GM13976 (cell line): ENCODE measurements at regions of chr13 and their contacts with region 1.

Region 1: GRCh38 chr13:21638319-21639282 is 32.3 kb upstream of the FGF9 start:
- DNase-seq: peak; percentile 60
- CTCF ChIP-seq: peak; percentile 39

Region 2: DNA sequence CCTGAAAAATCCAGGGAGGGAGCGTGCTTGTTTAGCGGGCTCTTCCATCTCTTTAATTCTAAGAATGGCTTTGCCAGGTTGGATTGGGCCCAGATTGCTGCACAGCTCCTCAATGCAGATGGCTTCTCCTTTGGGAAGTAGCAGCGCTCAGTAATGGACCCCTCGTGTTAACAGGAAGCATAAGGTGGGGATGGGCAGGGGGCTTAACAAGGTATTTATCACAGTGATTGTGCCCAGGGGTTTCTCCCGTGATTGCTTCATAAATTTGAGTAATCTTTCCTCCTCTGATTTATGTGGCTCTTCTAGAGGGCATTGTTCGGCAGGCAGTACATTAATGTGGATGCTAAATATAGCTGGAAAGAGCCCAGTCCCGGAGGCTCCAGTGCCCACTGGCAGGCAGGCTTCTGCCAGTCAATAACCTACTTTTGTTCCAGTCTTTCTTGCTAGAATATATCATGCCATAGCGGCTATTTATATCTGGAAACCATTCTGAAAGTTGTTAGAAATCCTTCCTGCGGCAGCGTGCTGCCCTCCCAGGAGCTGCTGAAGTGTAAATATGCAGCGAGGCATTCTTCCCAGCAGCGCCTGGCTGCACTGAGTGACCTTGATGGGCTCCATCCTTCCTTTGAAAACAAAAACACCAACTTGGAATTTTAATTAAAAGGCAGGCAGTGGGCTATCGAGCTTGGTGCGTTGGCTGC is 97.2 kb after region 1 on chr13:
- in situ Hi-C with region 1: no loop called
- DNase-seq: no peak
- CTCF ChIP-seq: no peak

Region 3: DNA sequence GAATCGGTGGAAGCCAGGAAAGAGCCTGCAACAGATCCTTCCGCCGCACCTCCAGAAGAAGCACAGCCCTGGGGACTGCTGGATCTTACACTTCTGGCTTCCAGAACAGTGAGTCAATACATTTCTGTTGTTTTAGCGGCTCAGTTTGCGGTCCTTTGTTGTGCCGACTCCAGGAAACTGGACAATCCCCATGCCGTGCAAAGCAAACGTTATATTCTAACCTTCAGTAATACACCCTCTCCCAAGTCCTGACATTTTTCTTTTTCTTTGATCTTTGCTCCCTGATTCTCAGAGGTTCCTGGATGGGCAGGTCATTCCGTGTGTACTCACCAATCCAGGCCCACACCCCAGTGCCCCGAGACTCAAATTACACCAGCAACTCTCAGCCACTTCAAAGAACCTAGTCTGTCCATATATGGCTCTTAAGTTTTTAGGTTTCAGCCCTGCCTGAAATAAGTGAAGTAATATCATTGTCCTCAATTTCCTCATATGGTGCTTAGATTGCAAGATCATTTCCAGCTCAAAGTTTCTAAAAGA is 1155.1 kb after region 1 on chr13:
- in situ Hi-C with region 1: loop called (anchors 25 kb)
- DNase-seq: no peak
- CTCF ChIP-seq: no peak